PC-3 (cell line): ENCODE measurements at regions of chr9 and their contacts with region 1.

Region 1: GRCh38 chr9:546797-547223 is 294.7 kb upstream of the DMRT1 start:
- DNase-seq: no peak
- ATAC-seq: peak; percentile 22; the same call in 1 of the 2 replicates
- H3K4me3 ChIP-seq: no peak overlapping the region
- H3K27ac ChIP-seq: no peak overlapping the region
- H3K4me1 ChIP-seq: no peaks in the 10 kb centered on the region
- H3K27me3 ChIP-seq: no peaks in the 10 kb centered on the region
- CTCF ChIP-seq: peak; percentile 37; the same call in 1 of the 2 replicates

Region 2: GRCh38 chr9:385818-386398 is 160.9 kb before region 1 on chr9:
- CTCF ChIA-PET with region 1: no interaction called
- POLR2A ChIA-PET with region 1: no interaction called
- intact Hi-C with region 1: loop called (anchors 2 kb)
- DNase-seq: peak; percentile 83
- ATAC-seq: peak; percentile 91
- H3K4me3 ChIP-seq: no peak overlapping the region
- H3K27ac ChIP-seq: no peak overlapping the region
- H3K4me1 ChIP-seq: no peaks in the 10 kb centered on the region
- H3K27me3 ChIP-seq: no peaks in the 10 kb centered on the region
- CTCF ChIP-seq: peak; percentile 86